Heart left ventricle (tissue), 16 donors: ENCODE measurements at regions of chr9 and their contacts with region 1.

Region 1: GRCh38 chr9:96854073-96854876 is at the start of gene ZNF782:
- DNase-seq: peak; percentile 93 to 95 (median 94)
- ATAC-seq: peak; percentile 96 to 99 (median 99)
- H3K4me3 ChIP-seq: peak within 1 kb of the TSS; percentile 58 to 94 (median 78)
- H3K27ac ChIP-seq: peak within 1 kb of the TSS; percentile 14 to 90 (median 81)
- H3K4me1 ChIP-seq: peaks cover 0 to 30% (median 15%) of the 10 kb centered on the region in 12 donors
- H3K27me3 ChIP-seq: no peaks in the 10 kb centered on the region
- CTCF ChIP-seq: no peak
- POLR2A ChIP-seq: peak in 1 of 2 donors; percentile 76
- total RNA-seq, gene ZNF782: 2.3 to 4.4 (median 2.9) TPM

Region 2: GRCh38 chr9:96777426-96777864 is 76.8 kb before region 1 on chr9:
- intact Hi-C with region 1: loop called in 1 of 10 experiments (anchors 5 kb)
- DNase-seq: no peak
- ATAC-seq: peak in 1 of 4 donors; percentile 33
- H3K4me3 ChIP-seq: peak overlapping the region; percentile 50 to 96 (median 76)
- H3K27ac ChIP-seq: peak overlapping the region; percentile 52 to 87 (median 77)
- H3K4me1 ChIP-seq: peaks cover 2 to 24% (median 15%) of the 10 kb centered on the region in 12 donors
- H3K27me3 ChIP-seq: no peaks in the 10 kb centered on the region
- CTCF ChIP-seq: no peak
- POLR2A ChIP-seq: no peak

Region 3: DNA sequence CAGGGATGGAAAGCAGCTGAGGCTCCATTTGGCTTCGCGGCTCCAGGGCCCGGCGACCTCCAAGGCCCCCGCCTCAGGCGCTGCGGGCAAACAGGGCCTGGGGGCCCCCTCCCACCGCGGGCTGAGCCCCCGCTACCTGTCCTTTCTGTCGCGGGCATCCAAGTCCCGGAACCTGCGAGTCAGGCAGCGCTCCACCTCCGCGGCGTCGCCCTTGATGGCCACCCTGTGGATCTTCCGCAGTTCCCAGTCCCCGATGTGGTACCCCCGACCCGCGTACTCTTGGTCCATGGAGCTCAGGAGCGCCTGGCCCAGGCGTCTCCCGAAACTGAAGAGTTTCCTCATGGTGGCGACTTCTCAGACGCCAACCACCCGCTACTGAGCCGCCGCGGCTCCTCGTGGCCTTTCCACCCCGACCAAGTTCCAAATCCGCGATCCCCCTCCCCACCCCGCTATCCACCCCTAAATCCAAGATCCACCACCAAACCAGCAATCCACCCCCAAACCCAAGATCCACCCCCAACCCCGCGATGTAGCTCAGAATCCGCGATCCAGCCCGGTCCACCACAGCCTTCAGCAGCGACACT is 366.7 kb after region 1 on chr9:
- intact Hi-C with region 1: loop called in 1 of 10 experiments (anchors 5 kb)
- DNase-seq: no peak
- ATAC-seq: peak in 3 of 4 donors; percentile 27 to 28 (median 28)
- H3K4me3 ChIP-seq: peak overlapping the region; percentile 12 to 54 (median 43)
- H3K27ac ChIP-seq: no peak overlapping the region
- H3K4me1 ChIP-seq: peaks cover 0 to 20% (median 9%) of the 10 kb centered on the region in 12 donors
- H3K27me3 ChIP-seq: peaks cover 16 to 63% (median 40%) of the 10 kb centered on the region in 9 donors
- CTCF ChIP-seq: no peak
- POLR2A ChIP-seq: no peak

Region 4: GRCh38 chr9:97398999-97399758 is 544.9 kb after region 1 on chr9:
- intact Hi-C with region 1: loop called (anchors 1 to 5 kb)
- DNase-seq: peak; percentile 21 to 83 (median 72)
- ATAC-seq: peak; percentile 55 to 88 (median 86)
- H3K4me3 ChIP-seq: no peak overlapping the region
- H3K27ac ChIP-seq: no peak overlapping the region
- H3K4me1 ChIP-seq: peaks cover 0 to 6% (median 0%) of the 10 kb centered on the region in 12 donors
- H3K27me3 ChIP-seq: peaks cover 0 to 4% (median 0%) of the 10 kb centered on the region in 9 donors
- CTCF ChIP-seq: peak; percentile 80 to 97 (median 91)
- POLR2A ChIP-seq: no peak

Region 5: GRCh38 chr9:97615439-97616072 is 761.3 kb after region 1 on chr9:
- intact Hi-C with region 1: loop called in 1 of 10 experiments (anchors 10 kb)
- DNase-seq: peak in 2 of 5 donors; percentile 46 to 58
- ATAC-seq: peak in 3 of 4 donors; percentile 63 to 75 (median 71)
- H3K4me3 ChIP-seq: no peak overlapping the region
- H3K27ac ChIP-seq: peak overlapping the region in 1 of 12 donors; percentile 41
- H3K4me1 ChIP-seq: peaks cover 0 to 10% (median 2%) of the 10 kb centered on the region in 12 donors
- H3K27me3 ChIP-seq: no peaks in the 10 kb centered on the region
- CTCF ChIP-seq: peak; percentile 71 to 90 (median 84)
- POLR2A ChIP-seq: no peak